GM12878 (cell line): ENCODE measurements at regions of chr11 and their contacts with region 1.

Region 1: GRCh38 chr11:118263695-118264567 is at the start of gene MPZL2:
- DNase-seq: no peak
- ATAC-seq: peak; percentile 70
- H3K4me3 ChIP-seq: no peak within 1 kb of the TSS
- H3K27ac ChIP-seq: no peak within 1 kb of the TSS
- H3K4me1 ChIP-seq: peaks cover 9% of the 10 kb centered on the region
- H3K27me3 ChIP-seq: peaks cover 0 to 13% of the 10 kb centered on the region in 2 experiments; a peak in 1 of 4 replicates
- CTCF ChIP-seq: no peak; a peak in 1 of 6 replicates
- EP300 ChIP-seq: no peak
- POLR2A ChIP-seq: no peak
- RAD21 ChIP-seq: no peak
- polyA plus RNA-seq, gene MPZL2: 4.2 to 4.5 TPM

Region 2: GRCh38 chr11:118277306-118277705 is 13.4 kb after region 1 on chr11:
- CTCF ChIA-PET with region 1: interaction called, 17 read pairs
- POLR2A ChIA-PET with region 1: no interaction called
- RAD21 ChIA-PET with region 1: interaction called, 5 read pairs
- SMC1A ChIA-PET with region 1: interaction called, 56 read pairs
- in situ Hi-C with region 1: no loop called
- intact Hi-C with region 1: no loop called
- DNase-seq: no peak
- ATAC-seq: peak; percentile 87
- H3K4me3 ChIP-seq: no peak overlapping the region
- H3K27ac ChIP-seq: no peak overlapping the region
- H3K4me1 ChIP-seq: peaks cover 13% of the 10 kb centered on the region; the same call in 1 of the 2 replicates
- H3K27me3 ChIP-seq: no peaks in the 10 kb centered on the region
- CTCF ChIP-seq: no peak
- EP300 ChIP-seq: no peak
- POLR2A ChIP-seq: no peak
- RAD21 ChIP-seq: no peak

Region 3: DNA sequence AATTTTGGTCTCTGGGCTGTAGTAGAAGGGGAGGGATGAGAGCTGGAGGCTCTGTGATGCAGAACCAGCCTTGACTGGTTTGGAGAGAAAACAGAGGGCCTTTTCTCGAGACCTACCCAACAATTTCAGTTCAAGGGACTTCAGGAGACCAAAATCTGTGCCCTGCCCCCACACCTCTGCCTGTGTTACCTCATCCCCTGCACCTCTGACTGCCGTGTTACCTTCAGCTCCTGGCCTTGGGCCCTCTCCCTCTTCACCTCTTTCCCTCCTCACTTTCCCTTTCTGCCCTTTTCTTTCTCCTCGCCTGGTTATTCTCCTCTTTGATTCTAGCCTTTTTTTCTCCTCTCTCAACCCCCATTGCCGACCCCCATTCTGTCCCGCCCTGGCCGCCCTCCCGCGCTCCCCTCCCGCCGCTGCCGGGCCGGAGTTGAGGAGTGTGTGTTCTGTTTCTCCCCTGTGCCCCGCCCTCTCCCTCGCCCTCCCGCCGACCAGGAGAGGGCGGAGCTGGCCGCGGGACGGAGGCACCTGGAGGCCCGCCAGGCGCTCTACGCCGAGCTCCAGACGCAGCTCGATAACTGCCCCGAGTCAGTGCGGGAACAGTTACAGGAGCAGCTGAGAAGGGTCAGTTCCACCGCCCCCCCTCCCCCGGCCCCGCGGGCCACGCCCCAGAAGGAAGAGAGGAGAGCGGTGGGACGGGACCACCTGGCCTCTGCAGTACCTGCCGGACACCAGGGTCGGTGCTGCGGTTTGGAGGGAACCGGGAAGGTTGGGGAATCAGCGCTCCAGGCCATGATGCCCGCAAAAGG is 370.7 kb after region 1 on chr11:
- CTCF ChIA-PET with region 1: no interaction called
- POLR2A ChIA-PET with region 1: no interaction called
- RAD21 ChIA-PET with region 1: no interaction called
- SMC1A ChIA-PET with region 1: no interaction called
- in situ Hi-C with region 1: no loop called
- intact Hi-C with region 1: no loop called
- DNase-seq: no peak
- ATAC-seq: peak; percentile 59
- H3K4me3 ChIP-seq: no peak overlapping the region
- H3K27ac ChIP-seq: no peak overlapping the region
- H3K4me1 ChIP-seq: no peaks in the 10 kb centered on the region
- H3K27me3 ChIP-seq: peaks cover 4 to 11% of the 10 kb centered on the region in 2 experiments
- CTCF ChIP-seq: no peak
- EP300 ChIP-seq: no peak
- POLR2A ChIP-seq: no peak
- RAD21 ChIP-seq: no peak